Mammary epithelial cell (primary cell): ENCODE measurements at regions of chr5 and their contacts with region 1.

Region 1: GRCh38 chr5:172833686-172834414 is at the start of gene ERGIC1:
- DNase-seq: peak; percentile 78
- H3K4me3 ChIP-seq: peak within 1 kb of the TSS; percentile 73 to 87 (median 82)
- H3K27ac ChIP-seq: peak within 1 kb of the TSS; percentile 72
- H3K4me1 ChIP-seq: peaks cover 8% of the 10 kb centered on the region
- H3K27me3 ChIP-seq: no peaks in the 10 kb centered on the region
- CTCF ChIP-seq: no peak
- total RNA-seq, gene ERGIC1: 58.8 to 98.6 TPM

Region 2: DNA sequence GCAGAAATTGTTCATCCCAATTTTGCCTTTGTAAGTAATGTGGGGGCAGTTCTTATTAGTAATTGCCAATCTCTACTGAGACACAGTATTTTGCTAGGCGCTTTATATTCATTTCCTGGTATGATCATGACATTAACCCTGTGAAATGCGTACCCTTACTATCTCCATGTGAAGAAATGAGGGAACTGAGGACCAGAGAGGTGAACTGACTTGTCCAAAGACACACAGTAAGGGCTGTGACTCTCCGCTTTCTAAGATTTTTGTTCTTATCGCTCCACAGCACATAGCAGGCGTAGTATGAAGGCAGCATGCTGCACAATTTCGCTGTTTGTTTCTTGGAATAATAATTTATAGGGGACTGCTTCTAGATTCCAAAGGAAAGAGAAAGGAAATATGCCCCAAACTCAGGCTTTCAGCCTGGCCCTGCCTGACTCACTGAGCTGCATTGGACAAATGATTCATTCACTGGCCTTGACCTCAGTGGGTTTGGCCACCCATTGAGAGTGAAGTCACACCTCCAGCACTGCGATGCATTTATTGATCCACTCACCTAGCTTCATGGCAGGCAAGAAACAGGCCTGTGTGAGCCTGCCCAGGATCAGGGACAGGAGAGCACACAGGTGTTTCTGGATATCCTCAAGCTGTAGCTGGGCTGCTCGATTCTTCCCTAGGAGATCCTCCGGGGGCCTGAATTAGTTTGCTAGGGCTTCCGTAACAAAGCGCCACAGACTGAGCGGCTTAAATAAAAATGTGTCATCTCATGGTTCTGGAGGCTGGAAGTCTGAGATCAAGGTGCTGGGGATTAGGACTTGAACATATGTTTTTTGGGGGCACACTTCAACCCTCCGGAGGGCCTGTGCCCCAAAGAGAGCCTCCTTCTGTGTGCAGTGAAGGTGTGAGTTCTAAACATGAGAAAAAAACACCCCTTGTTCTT is 55.7 kb before region 1 on chr5:
- CTCF ChIA-PET with region 1: no interaction called
- dilution Hi-C with region 1: no loop called
- in situ Hi-C with region 1: loop called in 1 of 2 experiments (anchors 5 kb)
- intact Hi-C with region 1: no loop called
- DNase-seq: peak; percentile 97
- H3K4me3 ChIP-seq: no peak overlapping the region
- H3K27ac ChIP-seq: peak overlapping the region; percentile 97
- H3K4me1 ChIP-seq: peaks cover 42% of the 10 kb centered on the region
- H3K27me3 ChIP-seq: no peaks in the 10 kb centered on the region
- CTCF ChIP-seq: no peak

Region 3: GRCh38 chr5:172868924-172869591 is 35.2 kb after region 1 on chr5:
- CTCF ChIA-PET with region 1: no interaction called
- dilution Hi-C with region 1: no loop called
- in situ Hi-C with region 1: no loop called
- intact Hi-C with region 1: loop called (anchors 1 kb)
- DNase-seq: peak; percentile 76
- H3K4me3 ChIP-seq: no peak overlapping the region
- H3K27ac ChIP-seq: peak overlapping the region; percentile 86
- H3K4me1 ChIP-seq: peaks cover 58% of the 10 kb centered on the region
- H3K27me3 ChIP-seq: no peaks in the 10 kb centered on the region
- CTCF ChIP-seq: peak in 1 of 2 donors; percentile 35